Left ventricle myocardium superior (tissue), 1 donor: ENCODE measurements at regions of chr20 and their contacts with region 1.

Region 1: DNA sequence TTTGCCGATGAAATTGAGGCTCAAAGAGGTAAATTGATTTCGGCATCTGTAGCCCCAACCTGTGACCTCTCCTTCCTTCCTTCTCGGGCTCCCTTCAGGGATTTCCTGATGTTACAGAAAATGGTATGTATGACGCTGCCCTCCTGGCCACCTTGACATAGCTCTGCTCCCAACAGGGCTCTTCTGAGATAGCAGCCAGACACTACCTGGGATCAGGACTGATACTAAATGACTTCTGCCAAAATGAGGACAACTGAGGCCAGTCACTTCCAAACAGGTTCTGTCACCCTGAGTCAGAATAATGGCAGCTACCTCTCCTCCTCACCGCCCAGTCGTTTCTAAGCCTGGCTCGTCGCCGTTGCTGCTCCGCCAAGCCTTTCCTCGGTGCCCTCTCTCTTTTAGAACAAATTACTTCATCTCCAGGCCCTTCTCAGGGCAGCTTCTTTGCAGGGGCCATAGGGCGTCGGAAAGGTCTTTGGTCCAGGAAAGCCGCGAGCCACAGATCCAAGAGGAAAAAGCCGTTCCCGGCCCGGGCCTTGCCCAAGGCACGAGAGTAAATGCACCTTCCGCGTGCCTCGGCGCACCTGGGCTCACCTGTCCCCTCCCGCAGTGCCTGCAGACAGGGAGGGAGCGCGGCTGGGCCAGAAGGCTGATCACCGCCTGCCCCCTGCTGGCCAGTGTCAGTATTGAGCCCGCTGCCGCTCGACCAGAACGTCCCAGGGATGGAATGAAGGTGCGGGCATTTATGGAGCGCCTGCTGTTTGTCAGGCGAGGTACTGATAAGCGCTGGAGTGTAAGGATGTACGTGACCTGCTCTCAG is 904 bp upstream of the LPIN3 start:
- DNase-seq: peak; percentile 90
- ATAC-seq: peak; percentile 79

Region 2: GRCh38 chr20:41135187-41135887 is 204.4 kb before region 1 on chr20:
- intact Hi-C with region 1: loop called (anchors 1 kb)
- DNase-seq: peak; percentile 56
- ATAC-seq: no peak

Region 3: GRCh38 chr20:41411391-41411847 is 71.7 kb after region 1 on chr20:
- intact Hi-C with region 1: loop called (anchors 10 kb)
- DNase-seq: no peak
- ATAC-seq: peak; percentile 84